ENCODE measurements at regions of chr11 and their contacts with region 1.

Region 1: DNA sequence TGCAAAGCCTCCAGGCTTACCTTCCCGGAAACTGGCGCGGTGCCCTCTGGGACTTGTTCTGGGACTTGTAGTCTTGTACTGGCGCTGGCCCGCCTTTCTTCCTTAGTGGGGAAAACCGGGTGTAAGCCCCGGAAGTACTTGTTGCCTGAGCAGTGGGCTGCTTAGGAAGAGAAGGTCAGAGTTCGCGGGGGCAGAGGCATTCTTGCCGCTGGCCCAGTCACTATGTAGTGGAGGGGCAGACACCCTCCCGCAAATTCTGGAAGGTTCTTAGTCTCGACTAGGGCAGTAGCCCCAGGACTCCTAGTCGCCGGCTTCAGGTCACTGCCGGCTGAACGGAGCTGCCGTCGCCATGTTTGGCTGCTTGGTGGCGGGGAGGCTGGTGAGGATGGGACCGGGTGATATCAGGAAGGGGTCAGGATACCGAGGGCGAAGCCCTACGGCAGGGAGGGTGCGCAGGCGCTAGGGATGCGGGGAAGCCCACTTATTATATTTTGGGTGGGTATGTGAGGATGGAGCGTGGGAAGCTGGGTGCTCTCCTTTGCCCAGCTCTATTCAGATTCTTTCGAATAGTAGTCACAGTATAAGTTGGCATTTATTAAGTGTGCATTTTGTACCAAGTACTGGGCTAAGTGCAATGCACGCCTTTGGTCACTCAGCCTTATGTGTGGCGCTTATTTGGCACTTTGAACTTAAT is at the start of gene HIKESHI:
- DNase-seq: peak; percentile 88
- CTCF ChIP-seq: no peak

Region 2: GRCh38 chr11:86291466-86292262 is 10.6 kb before region 1 on chr11:
- CTCF ChIA-PET with region 1: interaction called, 43 read pairs
- POLR2A ChIA-PET with region 1: no interaction called
- DNase-seq: peak; percentile 50
- CTCF ChIP-seq: peak; percentile 51

Measured in GM10248 (cell line).